ENCODE measurements at regions of chr20 and their contacts with region 1.

Region 1: GRCh38 chr20:50663095-50663850 is 28.1 kb downstream of the RIPOR3 start:
- DNase-seq: no peak
- H3K4me3 Mint-ChIP-seq: no peak overlapping the region
- H3K27ac Mint-ChIP-seq: no peak overlapping the region
- H3K4me1 Mint-ChIP-seq: peaks cover 2% of the 10 kb centered on the region
- H3K27me3 Mint-ChIP-seq: peaks cover 6% of the 10 kb centered on the region

Region 2: DNA sequence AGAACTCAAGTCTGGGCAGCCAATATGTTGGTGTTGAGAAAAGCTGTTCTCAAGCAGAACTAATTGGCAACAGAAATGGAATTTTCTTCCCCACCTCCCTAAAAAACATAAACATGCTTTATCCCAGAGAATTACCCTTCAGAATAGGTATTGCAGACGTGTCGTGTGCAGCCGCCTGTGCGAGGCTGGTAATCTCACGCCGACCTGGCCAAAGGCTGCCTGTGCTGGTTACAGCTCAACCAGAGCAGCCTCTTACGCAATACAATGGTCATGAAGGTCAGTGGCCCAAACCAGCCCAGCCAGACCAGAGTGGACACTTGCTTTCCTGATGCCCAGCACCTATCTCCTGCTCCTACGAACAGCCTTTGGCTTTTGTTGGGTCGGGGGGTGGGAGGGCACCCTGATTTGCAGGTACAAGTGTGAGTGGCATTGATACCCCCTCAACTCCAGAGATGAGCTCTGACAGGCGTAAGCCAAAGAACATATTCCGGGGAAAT is 17.2 kb after region 1 on chr20:
- intact Hi-C with region 1: no loop called
- DNase-seq: no peak
- H3K4me3 Mint-ChIP-seq: no peak overlapping the region
- H3K27ac Mint-ChIP-seq: no peak overlapping the region
- H3K4me1 Mint-ChIP-seq: no peaks in the 10 kb centered on the region
- H3K27me3 Mint-ChIP-seq: peaks cover 2% of the 10 kb centered on the region

Region 3: DNA sequence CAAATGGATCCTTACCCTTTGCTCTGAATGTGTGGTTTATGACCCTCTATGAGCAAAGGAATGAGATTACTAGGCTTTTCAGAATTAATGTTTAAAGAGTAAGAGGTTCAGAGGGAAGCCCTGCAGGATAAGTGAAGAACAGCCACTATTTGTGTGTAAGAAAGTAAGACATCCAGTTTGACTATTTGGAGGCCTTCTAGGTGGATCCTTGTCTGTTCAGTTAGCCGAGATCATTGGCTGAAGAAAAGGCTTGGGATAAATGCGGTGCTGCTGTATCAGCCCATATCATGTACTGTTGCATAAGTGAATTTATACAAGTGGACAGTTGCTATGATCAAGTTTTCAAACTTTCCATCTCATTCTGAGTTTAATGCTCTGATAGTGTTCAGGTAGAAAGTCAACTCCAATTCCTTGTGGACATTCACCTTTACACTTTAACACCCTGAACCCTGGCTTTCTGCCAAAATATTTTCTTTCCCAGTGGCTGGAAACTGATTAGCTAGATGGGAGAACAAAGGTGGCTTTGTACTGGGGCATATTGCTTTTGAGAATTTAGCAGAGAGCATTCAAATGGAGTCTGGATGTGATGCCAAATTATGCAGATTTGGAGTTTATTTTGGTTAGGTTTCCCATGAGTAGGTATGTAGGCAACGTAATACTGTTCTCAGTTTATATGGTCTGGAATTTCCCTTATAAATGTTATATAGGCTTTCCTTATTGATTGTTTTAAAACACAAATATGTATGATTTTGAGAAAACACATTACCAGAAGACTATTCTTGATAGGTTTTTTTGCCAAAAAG is 83.1 kb after region 1 on chr20:
- intact Hi-C with region 1: loop called (anchors 1 kb)
- DNase-seq: no peak
- H3K4me3 Mint-ChIP-seq: no peak overlapping the region
- H3K27ac Mint-ChIP-seq: peak overlapping the region; percentile 83
- H3K4me1 Mint-ChIP-seq: peaks cover 21% of the 10 kb centered on the region
- H3K27me3 Mint-ChIP-seq: no peaks in the 10 kb centered on the region

Measured in activated CD4-positive, alpha-beta T cell treated with anti-CD3 and anti-CD28 coated beads, Interleukin-2, amount 10 ng/mL, durations not matched to agents 24 days and 14 days (primary cell).